ENCODE measurements at regions of chr1 and their contacts with region 1.

Region 1: GRCh38 chr1:103106426-103107341 is 1.6 kb downstream of the COL11A1 start:
- DNase-seq: peak; percentile 72

Region 2: DNA sequence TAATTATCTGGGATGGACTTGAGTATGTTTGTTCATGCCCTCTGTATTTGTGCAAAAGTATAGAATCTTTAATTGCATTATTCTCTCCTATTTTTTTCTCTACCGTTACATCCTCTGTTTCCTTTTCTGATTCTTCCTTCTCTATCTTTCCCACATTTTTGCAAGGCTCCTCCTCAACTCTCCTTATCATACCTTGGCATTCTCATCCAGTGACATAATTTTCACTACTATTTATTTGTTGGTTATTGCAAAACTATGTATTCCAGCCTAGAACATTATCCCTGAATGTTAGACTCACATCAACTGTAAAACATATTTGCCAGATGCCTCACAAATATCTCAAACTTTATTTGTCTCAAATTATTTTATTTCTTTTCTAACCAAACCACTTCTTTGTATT is 380.3 kb before region 1 on chr1:
- in situ Hi-C with region 1: no loop called
- DNase-seq: no peak

Region 3: DNA sequence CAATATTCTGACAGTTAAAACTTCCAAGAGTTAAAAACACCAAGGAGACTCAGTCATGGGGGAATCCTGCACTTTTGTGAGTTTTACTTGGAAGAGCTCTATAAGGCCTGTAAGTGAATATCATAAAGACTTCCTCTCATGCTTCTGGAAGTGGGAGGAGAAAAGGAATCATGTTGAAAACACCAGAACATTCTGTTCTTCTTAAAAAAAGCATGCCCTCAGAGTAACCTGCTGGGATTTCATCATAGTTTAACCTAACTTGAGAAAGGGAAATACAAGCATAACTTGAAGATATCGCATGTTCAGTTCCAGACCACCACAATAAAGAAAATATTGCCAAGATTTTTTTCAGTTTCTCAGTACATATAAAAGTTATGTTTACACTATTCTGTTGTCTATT is 50.3 kb before region 1 on chr1:
- in situ Hi-C with region 1: no loop called
- DNase-seq: no peak

Region 4: DNA sequence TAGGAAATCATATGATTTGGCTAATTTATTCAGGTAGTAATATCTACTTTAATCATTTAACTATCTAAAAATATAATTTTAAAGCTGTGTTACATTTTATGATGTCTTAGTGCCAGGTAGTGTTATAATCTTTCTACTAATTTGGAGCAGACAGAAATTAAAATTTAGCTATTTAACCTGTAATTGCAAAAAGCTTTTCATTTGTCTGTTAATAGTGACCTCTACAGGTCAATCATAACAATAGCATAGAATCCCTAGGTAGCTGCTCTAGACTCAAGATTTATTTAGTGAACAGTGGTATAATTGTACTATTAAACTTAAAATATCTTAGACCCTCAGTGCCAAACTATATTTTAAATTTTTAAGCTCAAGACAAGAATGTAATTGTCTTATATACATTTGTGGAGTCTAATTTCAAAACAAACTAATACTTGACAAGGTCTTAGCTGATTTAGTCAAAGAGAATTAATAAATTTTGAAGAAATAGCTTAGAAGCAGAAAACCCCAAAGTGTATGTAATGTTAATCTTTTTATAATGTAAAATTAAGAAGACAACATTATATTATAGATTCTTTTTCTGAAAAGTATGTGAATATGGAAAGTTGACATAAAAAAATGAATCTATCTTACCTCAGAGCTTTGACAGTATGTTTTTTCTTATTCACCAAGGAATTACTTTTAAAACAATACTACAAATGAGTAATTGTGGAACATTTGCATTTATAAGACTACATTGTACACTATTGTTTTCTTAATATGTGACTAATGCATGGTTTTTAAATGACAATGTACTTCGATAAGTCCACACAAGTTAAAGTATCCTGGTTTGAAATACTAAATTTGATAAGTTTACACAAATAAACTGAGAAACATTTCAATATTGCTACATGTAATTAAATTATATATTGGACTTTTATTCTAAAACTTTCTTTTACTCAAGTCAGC is 354.7 kb after region 1 on chr1:
- in situ Hi-C with region 1: loop called (anchors 25 kb)
- DNase-seq: peak; percentile 42